HepG2 (cell line): ENCODE measurements at regions of chr17 and their contacts with region 1.

Region 1: DNA sequence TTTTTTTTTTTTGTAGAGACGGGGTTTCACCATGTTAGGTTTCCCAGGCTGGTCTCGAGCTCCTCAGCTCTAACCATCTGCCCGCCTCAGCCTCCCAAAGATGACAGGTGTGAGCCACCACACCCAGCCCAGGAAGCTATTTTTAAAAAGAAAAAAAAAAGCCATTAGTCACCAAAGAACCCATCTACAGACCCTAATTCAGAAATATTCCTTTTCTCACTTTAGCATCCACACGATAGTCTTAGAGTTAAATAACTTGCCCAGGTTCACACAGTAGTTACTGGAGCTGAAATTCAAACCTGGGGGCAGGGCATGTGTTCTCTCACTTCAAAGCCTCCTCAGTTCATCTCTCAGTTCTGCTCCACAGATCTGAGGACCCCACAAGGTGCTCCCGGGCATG is 70.3 kb upstream of the NOL11 start:
- DNase-seq: no peak
- ATAC-seq: no peak
- H3K4me3 ChIP-seq: no peak overlapping the region
- H3K27ac ChIP-seq: no peak overlapping the region
- H3K4me1 ChIP-seq: peaks cover 20% of the 10 kb centered on the region
- H3K27me3 ChIP-seq: no peaks in the 10 kb centered on the region
- CTCF ChIP-seq: no peak
- EP300 ChIP-seq: no peak
- POLR2A ChIP-seq: no peak
- RAD21 ChIP-seq: no peak

Region 2: DNA sequence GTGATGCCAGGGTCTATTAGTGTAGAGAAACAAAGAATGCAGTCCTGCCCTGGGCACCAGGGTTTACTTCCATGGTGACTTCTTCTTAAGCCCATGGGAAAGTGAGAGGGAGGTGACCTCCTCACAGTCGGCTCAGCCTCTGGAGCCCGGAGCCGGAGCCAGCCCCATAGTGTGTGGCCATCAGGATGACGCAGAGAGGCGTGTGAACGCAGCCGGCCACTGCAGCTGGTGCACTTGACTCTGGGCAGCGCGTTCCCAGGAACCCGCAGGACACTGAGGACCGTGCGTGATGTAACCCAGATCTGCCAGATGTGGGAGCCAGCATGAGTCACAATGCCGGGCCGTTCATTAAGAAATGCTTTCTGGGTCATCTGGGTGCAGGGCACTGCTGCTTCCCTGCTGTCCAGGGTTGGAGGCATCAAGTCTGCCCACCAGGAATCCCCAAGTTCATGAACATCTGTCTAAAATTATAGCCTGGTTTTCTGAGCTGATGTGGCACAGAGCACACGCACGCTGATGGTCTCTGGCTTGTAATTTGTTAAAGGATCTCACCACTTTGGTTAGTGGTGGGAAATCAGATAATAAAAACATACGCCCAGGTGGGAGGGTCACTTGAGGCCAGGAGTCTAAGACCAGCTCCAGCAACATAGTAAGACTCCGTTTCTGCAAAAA is 156.3 kb before region 1 on chr17:
- CTCF ChIA-PET with region 1: no interaction called
- POLR2A ChIA-PET with region 1: no interaction called
- in situ Hi-C with region 1: no loop called
- intact Hi-C with region 1: no loop called
- DNase-seq: peak; percentile 19
- ATAC-seq: peak; percentile 40; the same call in 2 of the 3 replicates
- H3K4me3 ChIP-seq: no peak overlapping the region
- H3K27ac ChIP-seq: no peak overlapping the region
- H3K4me1 ChIP-seq: peaks cover 17% of the 10 kb centered on the region
- H3K27me3 ChIP-seq: no peaks in the 10 kb centered on the region
- CTCF ChIP-seq: no peak
- EP300 ChIP-seq: no peak
- POLR2A ChIP-seq: no peak
- RAD21 ChIP-seq: no peak

Region 3: DNA sequence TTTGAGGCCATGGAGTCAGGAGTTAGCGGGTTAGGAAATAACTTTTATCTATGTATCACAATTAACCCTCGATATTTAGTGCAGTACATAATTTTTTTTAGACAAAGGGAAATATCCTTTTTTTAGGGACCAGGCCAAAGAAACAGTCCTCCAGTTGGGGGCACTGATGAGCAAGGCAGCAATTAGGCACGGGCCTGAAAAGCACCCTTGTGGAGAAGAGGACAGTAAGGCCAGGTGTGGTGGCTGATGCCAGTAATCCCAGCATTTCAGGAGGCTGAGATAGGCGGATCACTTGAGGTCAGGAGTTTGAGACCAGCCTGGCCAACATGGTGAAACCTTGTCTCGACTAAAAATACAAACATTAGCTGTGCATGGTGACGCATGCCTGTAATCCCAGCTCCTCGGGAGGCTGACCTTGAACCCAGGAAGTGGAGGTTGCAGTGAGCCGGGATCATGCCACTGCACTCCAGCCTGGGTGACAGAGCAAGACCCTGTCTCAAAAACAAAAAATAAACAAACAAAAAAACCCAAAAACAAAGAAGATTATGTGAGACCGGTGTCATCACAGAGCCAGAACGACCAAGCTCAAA is 88.0 kb before region 1 on chr17:
- CTCF ChIA-PET with region 1: no interaction called
- POLR2A ChIA-PET with region 1: no interaction called
- in situ Hi-C with region 1: no loop called
- intact Hi-C with region 1: no loop called
- DNase-seq: no peak
- ATAC-seq: peak; percentile 48
- H3K4me3 ChIP-seq: no peak overlapping the region
- H3K27ac ChIP-seq: no peak overlapping the region
- H3K4me1 ChIP-seq: peaks cover 13% of the 10 kb centered on the region
- H3K27me3 ChIP-seq: no peaks in the 10 kb centered on the region
- CTCF ChIP-seq: peak; percentile 38
- EP300 ChIP-seq: no peak
- POLR2A ChIP-seq: no peak
- RAD21 ChIP-seq: no peak

Region 4: DNA sequence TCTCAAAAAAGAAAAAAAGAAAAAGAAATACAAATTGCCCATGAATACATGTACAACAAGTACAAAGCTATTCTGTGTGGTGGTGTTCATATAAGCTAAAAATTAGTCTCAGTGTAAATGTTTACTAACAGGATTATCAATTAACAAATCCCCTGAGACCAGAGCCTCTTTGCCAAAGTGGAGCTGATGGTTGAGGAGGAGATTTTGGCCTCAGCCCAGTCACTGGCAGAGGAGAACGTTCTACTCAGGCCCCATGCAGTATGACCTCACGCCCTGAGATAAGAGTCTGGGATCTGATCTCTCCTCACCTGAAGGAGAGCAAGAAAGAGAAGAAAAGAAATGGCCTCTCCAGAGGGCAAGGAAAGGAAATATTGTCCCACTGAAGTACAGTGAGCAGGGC is 34.7 kb after region 1 on chr17:
- CTCF ChIA-PET with region 1: no interaction called
- POLR2A ChIA-PET with region 1: no interaction called
- in situ Hi-C with region 1: no loop called
- intact Hi-C with region 1: loop called (anchors 1 kb)
- DNase-seq: no peak
- ATAC-seq: peak; percentile 41; the same call in 2 of the 3 replicates
- H3K4me3 ChIP-seq: no peak overlapping the region
- H3K27ac ChIP-seq: no peak overlapping the region
- H3K4me1 ChIP-seq: peaks cover 9% of the 10 kb centered on the region
- H3K27me3 ChIP-seq: no peaks in the 10 kb centered on the region
- CTCF ChIP-seq: no peak
- EP300 ChIP-seq: no peak
- POLR2A ChIP-seq: no peak
- RAD21 ChIP-seq: no peak